Gastrocnemius medialis (tissue), 4 donors: ENCODE measurements at regions of chr1 and their contacts with region 1.

Region 1: GRCh38 chr1:54406339-54407153 is at the start of gene SSBP3:
- DNase-seq: peak; percentile 87 to 90
- ATAC-seq: peak; percentile 65 to 80
- H3K4me3 ChIP-seq: peak within 1 kb of the TSS; percentile 74 to 93 (median 82)
- H3K27ac ChIP-seq: peak within 1 kb of the TSS; percentile 90 to 98 (median 94)
- H3K4me1 ChIP-seq: peaks cover 49 to 50% of the 10 kb centered on the region in 2 donors
- H3K27me3 ChIP-seq: no peaks in the 10 kb centered on the region
- CTCF ChIP-seq: peak in 3 of 5 experiments; percentile 19 to 32 (median 22)
- POLR2A ChIP-seq: peak; percentile 93 to 97
- total RNA-seq, gene SSBP3: 3.6 to 21.0 (median 14.9) TPM

Region 2: DNA sequence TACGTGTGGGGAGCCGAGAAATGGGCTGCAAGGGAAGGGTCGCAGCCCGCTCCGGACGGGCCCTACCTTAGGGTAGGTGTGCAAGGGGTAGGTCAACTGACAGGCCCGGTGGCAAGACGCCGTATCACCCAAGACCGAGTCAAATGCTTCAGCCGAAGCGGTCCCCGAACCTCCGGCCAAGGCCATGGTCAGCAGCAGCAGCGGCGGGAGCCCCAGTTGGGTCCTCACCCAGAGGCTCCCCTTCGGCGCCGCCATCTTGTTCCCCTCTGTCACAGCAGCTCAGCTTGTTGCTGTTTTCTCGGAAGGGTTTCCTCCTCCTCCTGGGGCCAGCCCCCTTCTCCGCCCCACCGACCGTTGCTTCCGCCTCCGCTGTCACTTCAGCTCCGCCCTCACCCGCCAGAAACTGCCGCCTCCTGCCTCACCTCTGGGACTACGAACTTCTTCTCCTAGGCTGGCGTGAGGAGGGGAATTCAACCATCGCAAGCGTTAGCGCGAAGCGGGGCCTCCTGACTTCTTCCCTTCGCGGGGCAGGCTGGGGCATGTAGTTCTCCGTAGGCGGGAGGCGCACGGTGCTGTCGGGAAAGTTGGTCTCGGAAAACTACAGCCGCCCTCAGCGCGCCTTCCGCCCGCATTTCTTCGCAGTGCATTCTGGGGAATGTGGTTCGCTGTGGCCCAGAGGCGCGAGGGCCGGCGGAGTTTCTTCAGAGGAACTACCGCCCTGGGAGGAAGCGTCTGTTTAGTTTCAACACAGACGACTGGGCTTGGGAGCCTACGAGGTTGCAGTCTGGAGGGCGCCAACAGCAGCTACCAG is 353.4 kb before region 1 on chr1 and contains the starts of genes TCEANC2 and TMEM59:
- in situ Hi-C with region 1: no loop called
- intact Hi-C with region 1: loop called (anchors 5 kb)
- DNase-seq: peak; percentile 97 to 98
- ATAC-seq: peak; percentile 93 to 94
- H3K4me3 ChIP-seq: peak within 1 kb of the TSS; percentile 82 to 99 (median 96)
- H3K27ac ChIP-seq: peak within 1 kb of the TSS; percentile 98 to 99 (median 98)
- H3K4me1 ChIP-seq: peaks cover 49% of the 10 kb centered on the region in 2 donors
- H3K27me3 ChIP-seq: no peaks in the 10 kb centered on the region
- CTCF ChIP-seq: peak in 1 of 5 experiments; percentile 10
- POLR2A ChIP-seq: peak; percentile 80 to 85
- total RNA-seq, gene TCEANC2: 2.6 to 9.5 (median 7.0) TPM
- total RNA-seq, gene TMEM59: 156 to 248 (median 224) TPM

Region 3: DNA sequence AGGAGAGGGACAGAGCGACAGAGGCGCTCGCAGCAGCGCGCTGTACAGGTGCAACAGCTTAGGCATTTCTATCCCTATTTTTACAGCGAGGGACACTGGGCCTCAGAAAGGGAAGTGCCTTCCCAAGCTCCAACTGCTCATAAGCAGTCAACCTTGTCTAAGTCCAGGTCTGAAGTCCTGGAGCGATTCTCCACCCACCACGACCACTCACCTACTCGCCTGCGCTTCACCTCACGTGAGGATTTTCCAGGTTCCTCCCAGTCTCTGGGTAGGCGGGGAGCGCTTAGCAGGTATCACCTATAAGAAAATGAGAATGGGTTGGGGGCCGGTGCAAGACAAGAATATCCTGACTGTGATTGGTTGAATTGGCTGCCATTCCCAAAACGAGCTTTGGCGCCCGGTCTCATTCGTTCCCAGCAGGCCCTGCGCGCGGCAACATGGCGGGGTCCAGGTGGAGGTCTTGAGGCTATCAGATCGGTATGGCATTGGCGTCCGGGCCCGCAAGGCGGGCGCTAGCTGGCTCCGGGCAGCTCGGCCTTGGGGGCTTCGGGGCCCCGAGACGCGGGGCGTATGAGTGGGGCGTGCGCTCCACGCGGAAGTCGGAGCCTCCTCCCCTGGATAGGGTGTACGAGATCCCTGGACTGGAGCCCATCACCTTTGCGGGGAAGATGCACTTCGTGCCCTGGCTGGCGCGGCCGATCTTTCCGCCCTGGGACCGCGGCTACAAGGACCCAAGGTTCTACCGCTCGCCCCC is 206.6 kb before region 1 on chr1 and contains the starts of genes CYB5RL and MRPL37:
- in situ Hi-C with region 1: no loop called
- intact Hi-C with region 1: loop called (anchors 5 kb)
- DNase-seq: peak; percentile 94 to 95
- ATAC-seq: peak; percentile 99
- H3K4me3 ChIP-seq: peak within 1 kb of the TSS; percentile 94 to 100 (median 97)
- H3K27ac ChIP-seq: peak within 1 kb of the TSS; percentile 93 to 97 (median 96)
- H3K4me1 ChIP-seq: peaks cover 18 to 22% of the 10 kb centered on the region in 2 donors
- H3K27me3 ChIP-seq: no peaks in the 10 kb centered on the region
- CTCF ChIP-seq: no peak
- POLR2A ChIP-seq: peak; percentile 65 to 78
- total RNA-seq, gene CYB5RL: 1.8 to 5.8 (median 3.4) TPM
- total RNA-seq, gene MRPL37: 91.6 to 141 (median 121) TPM

Region 4: GRCh38 chr1:54287176-54287650 is 119.3 kb before region 1 on chr1:
- in situ Hi-C with region 1: loop called in 2 of 4 experiments (anchors 5 to 10 kb)
- intact Hi-C with region 1: no loop called
- DNase-seq: peak; percentile 58 to 88
- ATAC-seq: peak; percentile 73 to 82
- H3K4me3 ChIP-seq: peak overlapping the region; percentile 6 to 29 (median 18)
- H3K27ac ChIP-seq: peak overlapping the region; percentile 88 to 94 (median 92)
- H3K4me1 ChIP-seq: peaks cover 67 to 92% of the 10 kb centered on the region in 2 donors
- H3K27me3 ChIP-seq: no peaks in the 10 kb centered on the region
- CTCF ChIP-seq: no peak
- POLR2A ChIP-seq: no peak

Region 5: DNA sequence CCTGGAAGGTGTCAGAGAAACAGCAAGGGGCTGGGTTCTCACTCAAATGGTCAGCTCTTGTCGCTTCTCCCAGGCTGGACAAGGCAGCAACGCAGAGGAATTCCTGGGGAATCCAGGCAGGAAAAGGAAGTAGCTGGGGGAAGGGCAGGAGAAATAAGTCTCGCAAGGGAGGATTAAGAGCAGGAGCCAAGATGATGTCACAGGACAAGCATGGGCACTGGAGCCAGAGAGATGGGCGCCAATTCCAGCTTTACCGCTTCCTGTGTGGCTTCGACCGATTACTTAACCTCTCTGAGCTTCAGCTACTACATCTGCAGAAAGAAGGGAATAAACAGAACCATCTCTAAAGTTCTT is 70.8 kb before region 1 on chr1:
- in situ Hi-C with region 1: no loop called
- intact Hi-C with region 1: loop called (anchors 2 kb)
- DNase-seq: peak; percentile 68 to 77
- ATAC-seq: peak; percentile 55 to 66
- H3K4me3 ChIP-seq: peak overlapping the region; percentile 27 to 39 (median 32)
- H3K27ac ChIP-seq: peak overlapping the region; percentile 96 to 97 (median 96)
- H3K4me1 ChIP-seq: peaks cover 93% of the 10 kb centered on the region in 2 donors
- H3K27me3 ChIP-seq: no peaks in the 10 kb centered on the region
- CTCF ChIP-seq: no peak
- POLR2A ChIP-seq: no peak

Region 6: DNA sequence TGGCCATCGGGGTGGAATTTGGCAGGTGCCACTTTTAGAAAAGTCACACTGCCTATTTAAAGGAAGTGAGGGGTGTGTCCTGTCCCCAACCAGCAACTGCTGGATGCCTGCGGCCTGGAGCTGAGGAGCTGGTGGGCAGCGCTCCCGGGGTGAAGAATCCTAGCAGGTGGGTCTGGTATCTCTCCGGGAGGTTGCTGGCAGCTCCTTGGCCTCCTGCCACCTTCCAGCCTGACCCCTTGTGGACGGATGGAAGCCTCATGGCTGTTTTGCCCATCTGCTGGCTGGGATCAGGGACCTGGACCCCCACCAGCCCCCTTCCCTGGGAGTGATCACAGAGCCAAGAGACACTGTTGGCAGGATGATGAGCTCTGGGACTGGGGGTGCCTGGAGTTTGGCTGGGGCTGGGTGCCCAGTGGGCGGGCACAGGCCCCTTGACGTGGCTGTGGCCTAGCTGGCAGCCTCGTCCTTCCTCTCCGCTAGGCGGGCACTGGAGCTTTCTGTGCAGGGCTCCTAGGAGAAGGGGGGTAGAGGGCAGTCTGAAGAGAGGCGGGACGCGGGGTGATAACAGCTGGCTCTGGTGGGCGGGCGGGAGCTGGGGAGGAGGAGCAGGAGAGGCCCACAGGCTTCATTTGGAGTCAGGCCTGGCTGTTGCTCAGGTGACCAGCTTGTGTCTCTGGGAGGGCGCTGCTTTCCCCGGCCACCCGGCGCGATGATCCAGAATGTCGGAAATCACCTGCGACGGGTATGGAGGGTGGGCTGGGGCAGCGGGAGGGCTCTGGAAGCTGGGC is 141.2 kb after region 1 on chr1 and contains the start of gene ACOT11:
- in situ Hi-C with region 1: no loop called
- intact Hi-C with region 1: loop called (anchors 5 kb)
- DNase-seq: peak; percentile 87 to 96
- ATAC-seq: peak; percentile 74 to 83
- H3K4me3 ChIP-seq: peak within 1 kb of the TSS; percentile 27 to 51 (median 30)
- H3K27ac ChIP-seq: peak within 1 kb of the TSS; percentile 84 to 98 (median 92)
- H3K4me1 ChIP-seq: peaks cover 32 to 34% of the 10 kb centered on the region in 2 donors
- H3K27me3 ChIP-seq: no peaks in the 10 kb centered on the region
- CTCF ChIP-seq: peak; percentile 54 to 81 (median 73)
- POLR2A ChIP-seq: peak; percentile 80 to 81
- total RNA-seq, gene ACOT11: 0.90 to 3.2 (median 1.2) TPM